Activated naive CD4-positive, alpha-beta T cell treated with anti-CD3 and anti-CD28 coated beads for 36 hours (primary cell): ENCODE measurements at regions of chr4 and their contacts with region 1.

Region 1: GRCh38 chr4:186104114-186104889 is at the start of gene FAM149A:
- DNase-seq: peak; percentile 64
- H3K4me3 Mint-ChIP-seq: peak within 1 kb of the TSS; percentile 66
- H3K27ac Mint-ChIP-seq: no peak within 1 kb of the TSS
- H3K4me1 Mint-ChIP-seq: peaks cover 7% of the 10 kb centered on the region
- H3K27me3 Mint-ChIP-seq: peaks cover 45% of the 10 kb centered on the region
- total RNA-seq, gene FAM149A: 0.36 to 0.42 TPM

Region 2: DNA sequence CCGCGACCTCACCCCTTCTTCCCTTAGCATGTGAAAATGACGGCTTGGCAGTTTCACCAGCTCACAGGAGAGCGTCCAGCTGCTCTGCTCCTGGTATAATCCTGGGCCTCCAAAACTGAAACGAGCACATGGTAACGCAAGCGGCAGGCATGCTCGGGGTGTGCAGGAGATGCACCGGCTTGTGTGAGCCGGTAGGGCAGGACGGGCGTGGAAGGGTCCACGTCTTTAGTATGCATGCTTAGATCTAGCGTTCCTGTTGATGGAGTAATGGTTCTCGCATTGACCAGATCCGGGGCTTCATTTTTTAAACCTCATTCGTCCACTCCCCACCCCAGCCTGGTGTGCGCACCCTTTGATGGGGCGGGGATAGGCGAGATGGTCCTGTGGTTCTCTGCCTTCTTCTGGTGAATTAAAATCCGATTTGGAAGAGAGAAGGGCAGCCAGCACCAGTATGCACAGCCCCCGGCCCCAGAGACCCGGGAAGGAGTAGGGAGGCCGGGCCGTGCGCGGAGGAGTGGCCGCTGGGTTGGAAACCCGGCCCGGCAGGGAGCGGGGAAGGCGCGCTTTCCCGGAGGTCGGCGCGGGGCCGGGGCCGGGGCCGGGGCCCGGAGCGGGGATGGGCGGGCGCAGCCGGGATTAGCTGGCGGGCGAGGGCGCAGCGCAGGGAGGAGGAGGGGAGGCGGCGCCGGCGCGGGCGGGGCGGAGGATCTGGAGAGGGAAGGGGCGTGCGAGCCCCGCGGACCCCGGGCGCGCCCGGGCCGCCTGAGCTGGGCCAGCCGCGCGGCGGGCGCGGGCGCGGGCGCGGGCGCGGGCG is 40.0 kb after region 1 on chr4:
- CTCF ChIA-PET with region 1: no interaction called
- intact Hi-C with region 1: loop called (anchors 5 kb)
- DNase-seq: peak; percentile 22
- H3K4me3 Mint-ChIP-seq: peak overlapping the region; percentile 65
- H3K27ac Mint-ChIP-seq: no peak overlapping the region
- H3K4me1 Mint-ChIP-seq: peaks cover 2% of the 10 kb centered on the region
- H3K27me3 Mint-ChIP-seq: peaks cover 37% of the 10 kb centered on the region

Region 3: DNA sequence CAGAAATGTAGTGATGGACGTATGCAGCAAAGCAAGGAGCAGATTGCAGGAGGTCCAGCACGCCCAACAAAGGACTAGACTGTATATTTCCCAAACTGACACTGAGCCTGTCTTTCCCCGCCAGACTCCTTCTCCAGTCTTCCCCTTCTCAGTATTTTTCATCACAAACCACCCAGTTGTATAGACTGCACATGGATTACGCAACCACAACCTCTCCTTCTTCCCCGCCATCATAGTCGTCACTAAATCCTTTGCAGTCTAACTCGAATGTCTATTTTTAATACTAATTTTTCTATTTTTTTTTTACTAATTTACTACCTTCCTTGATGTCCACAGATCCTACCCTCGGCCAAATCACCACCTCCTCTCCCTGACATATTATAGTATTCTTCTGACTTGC is 345.7 kb after region 1 on chr4:
- CTCF ChIA-PET with region 1: no interaction called
- intact Hi-C with region 1: no loop called
- DNase-seq: no peak
- H3K4me3 Mint-ChIP-seq: no peak overlapping the region
- H3K27ac Mint-ChIP-seq: no peak overlapping the region
- H3K4me1 Mint-ChIP-seq: no peaks in the 10 kb centered on the region
- H3K27me3 Mint-ChIP-seq: peaks cover 3% of the 10 kb centered on the region